ENCODE measurements at regions of chr4 and their contacts with region 1.

Region 1: DNA sequence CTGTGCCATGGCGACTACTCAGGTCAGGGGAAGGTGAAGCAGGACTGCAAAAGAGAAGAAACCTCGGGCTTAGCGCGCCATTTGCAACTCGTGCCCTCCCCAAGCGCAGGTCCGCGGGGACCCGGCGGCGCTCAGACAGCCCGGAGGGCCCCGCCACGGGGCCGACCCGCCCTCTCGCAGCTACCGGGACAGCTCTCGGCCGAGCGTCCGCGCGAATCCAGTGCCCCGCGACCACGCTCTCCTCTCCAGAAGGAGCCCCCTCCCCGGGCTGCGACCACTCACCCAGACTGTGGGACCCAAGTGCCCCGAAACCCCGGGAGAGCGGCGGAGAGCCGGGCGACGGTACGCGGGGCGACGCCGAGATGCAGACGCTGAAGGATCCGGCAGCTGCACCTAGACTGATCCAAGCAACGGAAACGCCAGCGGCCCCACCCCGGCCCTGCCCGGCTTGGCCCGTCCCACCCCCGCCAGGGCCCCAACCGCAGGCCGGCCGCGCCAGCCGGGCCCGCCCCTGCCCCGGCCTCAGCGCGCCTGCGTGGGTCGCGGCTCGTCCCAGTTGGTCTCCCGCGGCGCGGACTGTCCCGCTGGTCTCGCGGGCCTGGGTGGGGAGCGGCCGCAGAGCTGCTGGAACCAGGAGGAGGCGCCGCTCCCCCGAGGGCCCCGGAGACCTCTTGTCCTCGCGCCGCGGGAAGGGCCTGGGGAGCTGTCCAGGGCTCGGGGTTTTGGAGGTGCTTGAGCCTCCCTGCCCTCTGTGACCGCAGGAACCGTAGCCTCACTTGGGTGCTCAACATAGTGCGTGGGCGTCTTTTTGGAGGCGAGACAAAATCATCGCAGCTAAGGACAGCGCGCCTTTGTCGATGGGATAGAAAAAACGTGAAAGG is at the start of gene ANXA5:
- DNase-seq: peak; percentile 92 to 96
- ATAC-seq: peak; percentile 95 to 98 (median 97)
- H3K4me3 ChIP-seq: peak within 1 kb of the TSS; percentile 96
- H3K27ac ChIP-seq: peak within 1 kb of the TSS; percentile 97
- H3K4me1 ChIP-seq: peaks cover 35% of the 10 kb centered on the region
- H3K27me3 ChIP-seq: no peaks in the 10 kb centered on the region
- CTCF ChIP-seq: peak; percentile 39
- total RNA-seq, gene ANXA5: 59.1 to 149 (median 84.5) TPM

Region 2: DNA sequence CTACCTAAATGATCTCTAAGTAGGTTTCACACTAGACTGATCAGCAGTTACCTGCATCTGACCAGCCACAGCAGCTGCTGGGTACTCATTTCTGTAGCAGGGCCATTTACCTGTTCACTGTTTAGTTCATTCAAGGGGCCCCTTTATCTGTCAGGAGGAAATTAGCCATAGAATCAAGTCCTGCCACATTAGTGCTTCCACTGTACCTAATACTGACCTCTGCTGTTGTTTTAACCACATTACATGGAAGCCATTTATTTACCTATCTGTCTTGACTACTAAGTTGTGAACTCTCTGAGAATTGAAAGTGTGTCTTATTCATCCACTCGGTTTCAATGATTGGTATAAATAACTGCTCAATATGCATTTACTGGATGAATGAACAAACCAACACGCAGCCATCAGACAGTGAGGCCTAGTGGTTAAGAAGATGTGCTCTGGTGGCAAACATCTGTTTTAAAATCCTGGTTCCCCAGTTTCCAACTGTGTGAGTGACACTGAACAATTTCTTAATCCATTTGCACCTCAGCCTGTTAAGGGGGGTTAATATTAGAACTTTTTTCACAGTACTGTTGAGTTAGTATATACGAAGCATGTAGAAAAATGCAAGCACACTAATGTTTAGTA is 29.9 kb after region 1 on chr4:
- intact Hi-C with region 1: loop called in 1 of 2 experiments (anchors 2 kb)
- DNase-seq: no peak
- ATAC-seq: peak; percentile 64 to 78 (median 72)
- H3K4me3 ChIP-seq: no peak overlapping the region
- H3K27ac ChIP-seq: no peak overlapping the region
- H3K4me1 ChIP-seq: no peaks in the 10 kb centered on the region
- H3K27me3 ChIP-seq: no peaks in the 10 kb centered on the region
- CTCF ChIP-seq: peak; percentile 66